ENCODE measurements at regions of chrX and their contacts with region 1.

Region 1: DNA sequence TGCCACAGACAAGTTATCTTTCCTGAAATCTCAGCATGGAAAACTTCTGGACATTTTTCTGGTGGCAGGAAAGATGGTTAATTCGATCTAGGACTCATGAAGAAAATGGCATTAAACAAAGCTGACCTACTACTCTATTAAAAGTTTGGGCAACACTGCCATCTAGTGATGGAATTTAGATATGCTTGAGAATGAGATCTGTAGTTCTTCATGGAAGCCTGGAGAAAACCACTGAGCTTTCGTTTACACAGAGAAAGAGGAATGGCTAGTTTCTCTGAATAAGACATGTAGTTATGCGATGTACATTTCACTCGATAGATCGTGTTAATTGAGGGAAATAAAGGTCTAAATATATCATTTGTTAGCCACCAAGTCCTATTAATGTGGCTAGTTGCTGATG is 51.7 kb upstream of the CHRDL1 start:
- H3K4me3 ChIP-seq: no peak overlapping the region
- H3K27ac ChIP-seq: no peak overlapping the region
- H3K4me1 ChIP-seq: no peaks in the 10 kb centered on the region
- CTCF ChIP-seq: peak; percentile 16; the same call in 1 of the 2 replicates

Region 2: GRCh38 chrX:110407910-110408545 is 439.3 kb before region 1 on chrX:
- CTCF ChIA-PET with region 1: interaction called, 17 read pairs
- POLR2A ChIA-PET with region 1: no interaction called
- H3K4me3 ChIP-seq: no peak overlapping the region
- H3K27ac ChIP-seq: no peak overlapping the region
- H3K4me1 ChIP-seq: no peaks in the 10 kb centered on the region
- CTCF ChIP-seq: no peak

Region 3: GRCh38 chrX:110425222-110426154 is 421.8 kb before region 1 on chrX:
- CTCF ChIA-PET with region 1: interaction called, 13 read pairs
- POLR2A ChIA-PET with region 1: no interaction called
- H3K4me3 ChIP-seq: no peak overlapping the region
- H3K27ac ChIP-seq: no peak overlapping the region
- H3K4me1 ChIP-seq: no peaks in the 10 kb centered on the region
- CTCF ChIP-seq: no peak

Region 4: DNA sequence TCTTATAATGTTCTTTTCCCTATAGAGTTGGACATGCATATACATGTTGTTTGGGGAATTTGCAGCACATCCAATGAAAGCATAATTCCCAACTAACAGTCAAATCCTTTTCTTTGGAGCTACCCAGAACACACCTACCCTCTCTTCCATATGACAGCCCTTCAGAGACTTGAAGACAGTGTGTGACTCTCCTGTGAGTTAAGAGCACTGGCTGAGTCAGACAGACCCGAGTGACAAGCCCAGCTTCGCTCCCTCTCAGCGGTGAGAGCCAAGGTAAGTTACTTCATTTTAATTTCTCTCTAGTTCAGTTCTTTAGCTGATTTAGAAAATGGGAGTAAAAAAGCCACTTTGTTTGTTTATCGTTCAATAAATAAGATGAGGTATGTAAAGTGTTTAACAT is 402.3 kb before region 1 on chrX:
- CTCF ChIA-PET with region 1: interaction called, 16 read pairs
- POLR2A ChIA-PET with region 1: no interaction called
- H3K4me3 ChIP-seq: no peak overlapping the region
- H3K27ac ChIP-seq: no peak overlapping the region
- H3K4me1 ChIP-seq: no peaks in the 10 kb centered on the region
- CTCF ChIP-seq: no peak

Region 5: GRCh38 chrX:110450050-110450449 is 397.3 kb before region 1 on chrX:
- CTCF ChIA-PET with region 1: interaction called, 28 read pairs
- POLR2A ChIA-PET with region 1: no interaction called
- H3K4me3 ChIP-seq: no peak overlapping the region
- H3K27ac ChIP-seq: no peak overlapping the region
- H3K4me1 ChIP-seq: no peaks in the 10 kb centered on the region
- CTCF ChIP-seq: peak; percentile 67

Region 6: DNA sequence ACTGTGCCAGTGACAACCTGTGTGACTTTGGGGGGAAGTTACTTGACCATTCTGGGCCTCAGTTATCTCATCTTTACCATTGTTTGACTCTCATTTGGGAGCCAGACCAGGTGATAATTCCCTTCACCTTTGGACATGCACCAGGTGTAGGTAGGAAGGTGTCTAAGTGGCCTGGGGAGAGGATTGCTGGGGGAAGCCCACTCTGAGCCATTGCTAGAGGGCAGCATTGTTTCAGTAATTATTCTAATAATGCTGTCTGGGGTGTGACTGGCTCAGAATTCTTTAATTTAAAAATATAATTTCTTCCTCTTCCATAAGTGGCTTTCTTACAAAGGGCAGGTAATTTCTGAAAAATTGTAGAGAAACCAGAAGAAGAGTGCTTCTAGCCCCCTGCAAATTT is 384.4 kb before region 1 on chrX:
- CTCF ChIA-PET with region 1: interaction called, 15 read pairs
- POLR2A ChIA-PET with region 1: no interaction called
- H3K4me3 ChIP-seq: no peak overlapping the region
- H3K27ac ChIP-seq: no peak overlapping the region
- H3K4me1 ChIP-seq: no peaks in the 10 kb centered on the region
- CTCF ChIP-seq: no peak

Region 7: GRCh38 chrX:110836982-110837381 is 10.4 kb before region 1 on chrX:
- CTCF ChIA-PET with region 1: interaction called, 31 read pairs
- POLR2A ChIA-PET with region 1: no interaction called
- H3K4me3 ChIP-seq: no peak overlapping the region
- H3K27ac ChIP-seq: no peak overlapping the region
- H3K4me1 ChIP-seq: no peaks in the 10 kb centered on the region
- CTCF ChIP-seq: peak; percentile 33; the same call in 1 of the 2 replicates

Region 8: GRCh38 chrX:110915111-110915510 is 67.8 kb after region 1 on chrX:
- CTCF ChIA-PET with region 1: no interaction called
- POLR2A ChIA-PET with region 1: no interaction called
- H3K4me3 ChIP-seq: no peak overlapping the region
- H3K27ac ChIP-seq: no peak overlapping the region
- H3K4me1 ChIP-seq: no peaks in the 10 kb centered on the region
- CTCF ChIP-seq: no peak

Region 9: DNA sequence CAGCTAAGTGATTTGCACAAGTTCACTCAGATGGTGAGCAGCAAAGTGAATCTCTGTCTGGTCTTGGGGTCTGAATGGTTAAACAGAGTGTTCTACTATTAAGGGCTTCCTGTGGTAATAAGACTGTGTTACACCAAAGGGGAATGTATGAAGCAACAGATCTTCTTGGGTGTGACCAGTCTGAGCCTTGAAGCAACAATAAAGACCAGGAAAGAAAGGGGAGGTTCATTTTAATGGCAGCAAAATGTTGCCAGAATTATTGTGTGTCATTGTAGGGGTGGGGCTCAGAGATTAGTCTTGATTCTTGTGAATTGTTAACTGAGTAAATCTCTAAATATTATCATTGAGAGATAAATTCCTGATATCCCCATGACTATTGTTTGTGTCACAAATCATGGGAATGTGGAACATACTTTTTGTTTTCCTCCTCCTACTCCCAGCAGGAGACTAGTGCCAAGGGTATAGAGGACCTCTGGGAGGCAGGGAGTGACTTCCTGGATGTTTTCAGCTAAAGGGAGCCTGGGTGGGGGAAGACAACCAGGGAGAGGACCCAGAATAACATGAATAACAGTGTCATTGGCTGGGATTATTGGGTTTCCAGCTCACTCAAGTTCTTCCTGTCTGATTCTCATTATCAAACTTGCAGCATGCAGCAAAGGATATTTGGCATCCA is 107.2 kb after region 1 on chrX:
- CTCF ChIA-PET with region 1: no interaction called
- POLR2A ChIA-PET with region 1: no interaction called
- H3K4me3 ChIP-seq: no peak overlapping the region
- H3K27ac ChIP-seq: no peak overlapping the region
- H3K4me1 ChIP-seq: no peaks in the 10 kb centered on the region
- CTCF ChIP-seq: no peak